Activated CD8-positive, alpha-beta T cell treated with anti-CD3 and anti-CD28 coated beads for 36 hours (primary cell): ENCODE measurements at regions of chr6 and their contacts with region 1.

Region 1: GRCh38 chr6:26270903-26271667 is 93.9 kb upstream of the BTN3A2 start:
- DNase-seq: peak; percentile 87
- ATAC-seq: peak; percentile 43
- H3K4me3 Mint-ChIP-seq: no peak overlapping the region
- H3K27ac Mint-ChIP-seq: no peak overlapping the region
- H3K4me1 Mint-ChIP-seq: peaks cover 18% of the 10 kb centered on the region
- H3K27me3 Mint-ChIP-seq: no peaks in the 10 kb centered on the region
- CTCF ChIP-seq: no peak

Region 2: DNA sequence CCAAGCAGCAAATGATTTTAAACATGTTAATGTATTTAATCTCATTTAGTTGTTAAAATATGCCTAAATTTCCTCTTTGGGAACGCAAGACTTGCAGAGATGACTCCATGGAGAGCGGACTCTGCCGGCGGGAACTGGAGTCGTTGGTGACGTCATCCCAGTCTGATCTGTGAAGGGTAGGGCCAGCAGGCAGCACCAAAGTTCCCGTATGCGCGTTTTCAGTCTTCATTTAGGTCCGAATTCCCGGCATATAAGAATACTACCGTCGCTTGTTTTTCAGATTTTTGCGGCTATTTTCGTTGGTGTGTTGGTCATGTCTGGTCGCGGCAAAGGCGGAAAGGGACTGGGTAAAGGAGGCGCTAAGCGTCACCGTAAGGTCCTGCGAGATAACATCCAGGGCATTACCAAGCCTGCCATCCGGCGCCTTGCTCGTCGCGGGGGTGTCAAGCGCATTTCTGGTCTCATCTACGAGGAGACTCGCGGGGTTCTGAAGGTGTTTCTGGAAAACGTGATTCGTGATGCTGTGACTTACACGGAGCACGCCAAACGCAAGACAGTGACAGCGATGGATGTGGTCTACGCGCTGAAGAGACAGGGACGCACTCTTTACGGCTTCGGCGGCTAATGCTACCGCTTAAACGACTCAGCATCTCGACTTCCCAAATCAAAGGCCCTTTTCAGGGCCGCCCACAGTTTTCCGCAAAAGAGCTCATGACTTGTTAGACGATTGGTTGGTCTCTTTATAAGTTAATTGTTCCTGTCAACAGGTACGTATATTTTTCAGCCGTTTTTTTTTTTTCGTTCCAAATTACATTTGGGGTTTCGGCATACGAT is 66.5 kb before region 1 on chr6:
- CTCF ChIA-PET with region 1: interaction called, 3 read pairs
- POLR2A ChIA-PET with region 1: interaction called, 153 read pairs
- intact Hi-C with region 1: loop called (anchors 5 kb)
- DNase-seq: peak; percentile 91
- ATAC-seq: peak; percentile 75
- H3K4me3 Mint-ChIP-seq: no peak overlapping the region
- H3K27ac Mint-ChIP-seq: no peak overlapping the region
- H3K4me1 Mint-ChIP-seq: peaks cover 17% of the 10 kb centered on the region
- H3K27me3 Mint-ChIP-seq: no peaks in the 10 kb centered on the region
- CTCF ChIP-seq: no peak

Region 3: GRCh38 chr6:26223650-26224546 is 47.2 kb before region 1 on chr6:
- CTCF ChIA-PET with region 1: interaction called, 3 read pairs
- POLR2A ChIA-PET with region 1: interaction called, 33 read pairs
- intact Hi-C with region 1: loop called (anchors 5 kb)
- DNase-seq: peak; percentile 77
- ATAC-seq: peak; percentile 82
- H3K4me3 Mint-ChIP-seq: no peak overlapping the region
- H3K27ac Mint-ChIP-seq: no peak overlapping the region
- H3K4me1 Mint-ChIP-seq: peaks cover 14% of the 10 kb centered on the region
- H3K27me3 Mint-ChIP-seq: no peaks in the 10 kb centered on the region
- CTCF ChIP-seq: no peak

Region 4: GRCh38 chr6:26249957-26250697 is 21.0 kb before region 1 on chr6:
- CTCF ChIA-PET with region 1: interaction called, 6 read pairs
- POLR2A ChIA-PET with region 1: interaction called, 119 read pairs
- intact Hi-C with region 1: loop called (anchors 2 kb)
- DNase-seq: peak; percentile 84
- ATAC-seq: peak; percentile 68
- H3K4me3 Mint-ChIP-seq: peak overlapping the region; percentile 82
- H3K27ac Mint-ChIP-seq: peak overlapping the region; percentile 99
- H3K4me1 Mint-ChIP-seq: peaks cover 27% of the 10 kb centered on the region
- H3K27me3 Mint-ChIP-seq: no peaks in the 10 kb centered on the region
- CTCF ChIP-seq: peak; percentile 43

Region 5: GRCh38 chr6:26285143-26286134 is 14.4 kb after region 1 on chr6:
- CTCF ChIA-PET with region 1: interaction called, 22 read pairs
- POLR2A ChIA-PET with region 1: interaction called, 242 read pairs
- intact Hi-C with region 1: loop called (anchors 1 kb)
- DNase-seq: peak; percentile 99
- ATAC-seq: peak; percentile 79
- H3K4me3 Mint-ChIP-seq: peak overlapping the region; percentile 88
- H3K27ac Mint-ChIP-seq: peak overlapping the region; percentile 100
- H3K4me1 Mint-ChIP-seq: peaks cover 15% of the 10 kb centered on the region
- H3K27me3 Mint-ChIP-seq: peaks cover 2% of the 10 kb centered on the region
- CTCF ChIP-seq: no peak

Region 6: GRCh38 chr6:26322645-26323482 is 51.8 kb after region 1 on chr6:
- CTCF ChIA-PET with region 1: interaction called, 3 read pairs
- POLR2A ChIA-PET with region 1: interaction called, 28 read pairs
- intact Hi-C with region 1: no loop called
- DNase-seq: peak; percentile 79
- ATAC-seq: peak; percentile 65
- H3K4me3 Mint-ChIP-seq: peak overlapping the region; percentile 85
- H3K27ac Mint-ChIP-seq: peak overlapping the region; percentile 94
- H3K4me1 Mint-ChIP-seq: peaks cover 22% of the 10 kb centered on the region
- H3K27me3 Mint-ChIP-seq: peaks cover 8% of the 10 kb centered on the region
- CTCF ChIP-seq: no peak